A549 (cell line): ENCODE measurements at regions of chr7 and their contacts with region 1.

Region 1: GRCh38 chr7:83271212-83272099 is 108.8 kb upstream of the PCLO start:
- DNase-seq: peak in 1 of 2 experiments; percentile 44
- ATAC-seq: peak; percentile 84 to 89
- H3K4me3 ChIP-seq: no peak overlapping the region
- H3K27ac ChIP-seq: no peak overlapping the region
- H3K4me1 ChIP-seq: no peaks in the 10 kb centered on the region
- CTCF ChIP-seq: peak; percentile 53
- EP300 ChIP-seq: no peak
- POLR2A ChIP-seq: no peak
- RAD21 ChIP-seq: peak; percentile 59 to 61; a peak in 4 of 5 replicates

Region 2: GRCh38 chr7:82810558-82811259 is 460.7 kb before region 1 on chr7:
- CTCF ChIA-PET with region 1: interaction called, 17 read pairs
- POLR2A ChIA-PET with region 1: no interaction called
- DNase-seq: peak; percentile 34 to 63
- ATAC-seq: peak; percentile 83 to 90
- H3K4me3 ChIP-seq: no peak overlapping the region
- H3K27ac ChIP-seq: no peak overlapping the region
- H3K4me1 ChIP-seq: peaks cover 2% of the 10 kb centered on the region
- CTCF ChIP-seq: peak; percentile 87
- EP300 ChIP-seq: no peak
- POLR2A ChIP-seq: no peak
- RAD21 ChIP-seq: peak; percentile 62 to 66

Region 3: GRCh38 chr7:83259064-83259463 is 12.4 kb before region 1 on chr7:
- CTCF ChIA-PET with region 1: interaction called, 10 read pairs
- POLR2A ChIA-PET with region 1: no interaction called
- DNase-seq: no peak
- ATAC-seq: no peak
- H3K4me3 ChIP-seq: no peak overlapping the region
- H3K27ac ChIP-seq: no peak overlapping the region
- H3K4me1 ChIP-seq: no peaks in the 10 kb centered on the region
- CTCF ChIP-seq: no peak
- EP300 ChIP-seq: no peak
- POLR2A ChIP-seq: no peak
- RAD21 ChIP-seq: no peak